ENCODE measurements at regions of chr13 and their contacts with region 1.

Region 1: DNA sequence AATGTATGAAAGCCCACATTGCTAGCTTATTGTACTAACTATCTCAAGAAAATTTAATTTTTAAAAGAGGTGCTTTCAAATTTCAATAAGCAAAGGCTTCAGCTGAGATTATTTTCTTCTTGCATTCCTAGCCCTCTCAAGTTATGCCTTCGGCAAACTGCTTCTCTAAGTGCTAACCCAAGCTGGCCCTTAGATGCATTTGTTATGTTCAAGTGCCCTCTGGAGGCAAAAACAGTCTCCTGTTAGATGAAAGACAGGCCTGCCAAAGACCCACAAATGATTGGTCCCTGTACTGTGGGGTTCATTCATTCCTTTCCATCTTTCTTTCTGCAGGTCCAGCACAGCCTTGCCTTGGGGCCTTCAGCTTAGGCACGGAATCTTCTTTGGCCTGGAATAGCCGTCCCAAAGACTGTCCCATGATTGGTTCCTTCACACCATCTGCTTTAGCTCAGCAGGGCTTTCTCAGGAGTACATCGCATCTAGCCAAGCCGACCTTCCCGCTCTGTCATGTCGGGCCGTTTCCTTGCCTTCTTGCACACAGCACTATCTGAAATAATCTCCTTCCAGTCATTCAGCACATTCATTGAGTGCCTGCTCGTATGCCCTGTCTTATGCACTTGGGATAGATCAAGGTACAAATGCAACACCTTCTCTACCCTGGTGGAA is 26.4 kb upstream of the TPTE2 start:
- DNase-seq: peak in 7 of 9 donors; percentile 14 to 58 (median 42)
- ATAC-seq: peak; percentile 48
- H3K4me3 ChIP-seq: peak overlapping the region; percentile 36
- H3K4me3 Mint-ChIP-seq: peak overlapping the region; percentile 68 to 89 (median 80)
- H3K27ac ChIP-seq: peak overlapping the region; percentile 31
- H3K27ac Mint-ChIP-seq: peak overlapping the region; percentile 76 to 94 (median 86)
- H3K4me1 ChIP-seq: peaks cover 6 to 17% of the 10 kb centered on the region in 2 donors
- H3K4me1 Mint-ChIP-seq: peaks cover 14 to 32% (median 25%) of the 10 kb centered on the region in 7 donors
- H3K27me3 ChIP-seq: no peaks in the 10 kb centered on the region
- H3K27me3 Mint-ChIP-seq: peaks cover 0 to 9% (median 0%) of the 10 kb centered on the region in 5 donors

Region 2: GRCh38 chr13:19633479-19634255 is 45.9 kb after region 1 on chr13 and contains the start of gene MPHOSPH8:
- CTCF ChIA-PET with region 1: no interaction called
- POLR2A ChIA-PET with region 1: interaction called, 11 read pairs
- intact Hi-C with region 1: loop called (anchors 1 kb)
- DNase-seq: peak; percentile 82 to 94 (median 92)
- ATAC-seq: peak; percentile 99
- H3K4me3 ChIP-seq: peak within 1 kb of the TSS; percentile 83
- H3K4me3 Mint-ChIP-seq: peak within 1 kb of the TSS; percentile 96 to 100 (median 100)
- H3K27ac ChIP-seq: peak within 1 kb of the TSS; percentile 91
- H3K27ac Mint-ChIP-seq: peak within 1 kb of the TSS; percentile 98 to 100 (median 99)
- H3K4me1 ChIP-seq: peaks cover 20 to 28% of the 10 kb centered on the region in 2 donors
- H3K4me1 Mint-ChIP-seq: peaks cover 29 to 42% (median 34%) of the 10 kb centered on the region in 7 donors
- H3K27me3 ChIP-seq: no peaks in the 10 kb centered on the region
- H3K27me3 Mint-ChIP-seq: peaks cover 0 to 3% (median 0%) of the 10 kb centered on the region in 5 donors
- total RNA-seq, gene MPHOSPH8: 50.6 to 131 (median 65.6) TPM

Region 3: DNA sequence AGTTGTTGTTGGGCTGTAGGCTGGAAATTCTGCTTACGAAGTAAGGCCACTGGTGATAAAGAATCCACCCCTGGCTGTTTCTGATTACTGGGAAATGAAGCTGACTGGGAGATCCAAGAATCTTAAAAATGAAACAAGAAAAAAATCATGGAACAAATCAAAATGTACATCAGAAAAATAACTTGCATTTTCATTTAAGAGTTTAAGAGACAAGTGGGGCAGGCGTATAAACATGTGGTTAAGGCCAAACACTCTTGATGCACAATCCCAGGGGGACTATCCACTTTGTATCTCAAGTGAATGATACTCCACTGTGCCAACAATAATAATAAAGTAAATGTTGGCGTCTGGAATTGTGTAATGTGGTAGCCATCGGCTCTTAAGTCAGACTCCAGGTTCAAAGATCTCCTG is 251.1 kb after region 1 on chr13:
- CTCF ChIA-PET with region 1: no interaction called
- POLR2A ChIA-PET with region 1: no interaction called
- intact Hi-C with region 1: no loop called
- DNase-seq: no peak
- ATAC-seq: no peak
- H3K4me3 ChIP-seq: no peak overlapping the region
- H3K4me3 Mint-ChIP-seq: no peak overlapping the region
- H3K27ac ChIP-seq: no peak overlapping the region
- H3K27ac Mint-ChIP-seq: peak overlapping the region in 1 of 9 donors; percentile 17
- H3K4me1 ChIP-seq: no peaks in the 10 kb centered on the region
- H3K4me1 Mint-ChIP-seq: peaks cover 0 to 16% (median 4%) of the 10 kb centered on the region in 7 donors
- H3K27me3 ChIP-seq: no peaks in the 10 kb centered on the region
- H3K27me3 Mint-ChIP-seq: no peaks in the 10 kb centered on the region

Region 4: DNA sequence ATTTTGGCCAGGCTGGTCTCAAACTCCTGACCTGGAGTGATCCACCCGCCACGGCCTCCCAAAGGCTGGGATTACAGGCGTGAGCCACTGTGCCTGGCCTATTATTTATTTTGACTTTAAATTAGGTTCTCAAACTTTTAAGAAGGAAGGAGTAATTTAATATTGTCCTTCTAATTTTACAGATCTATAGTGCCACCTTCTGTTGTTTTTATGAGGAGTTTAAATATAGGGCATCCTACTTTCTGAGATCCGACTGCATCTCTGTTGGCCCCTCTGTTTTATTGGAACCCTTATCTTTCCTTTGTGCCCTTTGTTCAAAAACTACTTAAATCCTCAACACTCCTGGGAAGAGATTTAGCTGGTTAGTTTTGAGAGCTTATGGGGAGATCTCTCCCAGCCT is 301.0 kb after region 1 on chr13:
- CTCF ChIA-PET with region 1: no interaction called
- POLR2A ChIA-PET with region 1: no interaction called
- intact Hi-C with region 1: loop called in 1 of 2 experiments (anchors 1 kb)
- DNase-seq: peak in 5 of 9 donors; percentile 2 to 33 (median 13)
- ATAC-seq: no peak
- H3K4me3 ChIP-seq: no peak overlapping the region
- H3K4me3 Mint-ChIP-seq: no peak overlapping the region
- H3K27ac ChIP-seq: no peak overlapping the region
- H3K27ac Mint-ChIP-seq: no peak overlapping the region
- H3K4me1 ChIP-seq: no peaks in the 10 kb centered on the region
- H3K4me1 Mint-ChIP-seq: no peaks in the 10 kb centered on the region
- H3K27me3 ChIP-seq: no peaks in the 10 kb centered on the region
- H3K27me3 Mint-ChIP-seq: peaks cover 0 to 3% (median 0%) of the 10 kb centered on the region in 5 donors

Measured in naive thymus-derived CD4-positive, alpha-beta T cell (primary cell).